ENCODE measurements at regions of chr19 and their contacts with region 1.

Region 1: GRCh38 chr19:13117772-13118423 is at the start of gene NACC1:
- DNase-seq: peak; percentile 87 to 99 (median 90)

Region 2: DNA sequence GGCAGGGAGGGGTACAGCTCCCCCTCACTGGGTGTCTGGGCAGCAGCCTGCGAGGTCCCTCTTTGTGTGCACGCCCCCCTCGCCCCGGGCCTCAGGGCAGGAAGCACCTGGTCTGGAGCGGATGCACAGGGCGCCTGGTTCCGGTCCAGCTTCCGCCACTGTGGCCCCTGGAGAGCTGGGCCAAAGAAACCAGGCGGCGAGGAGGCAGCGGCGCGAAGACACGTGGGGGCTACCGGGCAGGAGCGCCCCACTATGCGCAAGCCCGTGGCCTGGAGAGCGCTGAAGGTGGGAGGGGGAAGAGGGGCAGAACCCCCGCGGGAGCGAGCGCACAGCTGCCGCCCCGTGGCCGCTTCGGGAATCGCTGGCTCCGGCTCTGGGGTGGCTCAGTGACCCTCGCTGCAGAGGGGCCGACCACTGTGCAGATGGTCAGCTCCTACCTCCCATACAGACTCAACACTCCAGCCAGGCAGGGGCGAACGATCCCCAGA is 13.5 kb before region 1 on chr19:
- intact Hi-C with region 1: no loop called
- DNase-seq: peak in 6 of 10 donors; percentile 56 to 92 (median 70)

Region 3: GRCh38 chr19:13150187-13150930 is 32.5 kb after region 1 on chr19 and contains the starts of genes IER2 and STX10:
- intact Hi-C with region 1: loop called (anchors 1 kb)
- DNase-seq: peak; percentile 95 to 99 (median 97)